ENCODE measurements at regions of chr6 and their contacts with region 1.

Region 1: GRCh38 chr6:167119670-167120381 is 3.1 kb upstream of the CCR6 start:
- DNase-seq: no peak

Region 2: DNA sequence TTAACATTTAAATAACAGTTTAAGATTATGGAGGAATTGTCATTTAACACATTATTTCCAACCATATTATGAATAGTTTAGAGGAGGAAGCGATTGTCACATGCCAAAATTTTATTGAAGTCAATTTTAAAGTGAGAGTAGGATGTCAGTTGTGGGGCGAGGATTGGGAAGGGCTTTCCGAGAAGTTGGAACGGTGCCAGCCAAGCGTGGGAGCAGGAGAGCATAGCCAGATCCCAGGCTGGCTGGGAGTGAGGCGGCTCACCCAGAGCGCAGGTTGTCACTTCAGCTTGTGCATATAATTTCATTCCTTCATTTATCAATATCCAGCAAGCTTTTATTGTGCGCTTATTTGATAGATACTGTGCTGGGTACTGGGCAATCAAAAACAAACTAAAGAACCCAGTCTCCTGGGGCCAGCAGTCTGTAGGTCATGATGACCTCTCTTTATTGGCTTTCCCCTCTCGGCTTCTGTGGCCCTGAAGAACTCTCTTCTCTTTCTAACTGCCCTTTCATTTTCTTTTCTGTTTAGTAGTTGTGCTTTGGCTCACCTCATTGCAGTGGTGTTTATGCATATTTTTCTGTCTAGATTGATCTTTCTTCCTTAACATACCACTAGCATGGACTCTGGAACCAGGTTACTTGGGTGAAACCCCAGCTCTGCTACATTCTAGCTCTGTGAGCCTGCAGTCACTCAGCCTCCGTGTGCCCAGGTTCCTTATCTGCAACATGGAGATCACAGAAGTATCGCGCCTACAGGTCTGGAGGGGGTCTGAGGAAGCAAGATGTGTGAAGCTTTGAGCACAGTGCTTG is 114.3 kb before region 1 on chr6:
- intact Hi-C with region 1: loop called in 1 of 2 experiments (anchors 10 kb)
- DNase-seq: no peak

Region 3: DNA sequence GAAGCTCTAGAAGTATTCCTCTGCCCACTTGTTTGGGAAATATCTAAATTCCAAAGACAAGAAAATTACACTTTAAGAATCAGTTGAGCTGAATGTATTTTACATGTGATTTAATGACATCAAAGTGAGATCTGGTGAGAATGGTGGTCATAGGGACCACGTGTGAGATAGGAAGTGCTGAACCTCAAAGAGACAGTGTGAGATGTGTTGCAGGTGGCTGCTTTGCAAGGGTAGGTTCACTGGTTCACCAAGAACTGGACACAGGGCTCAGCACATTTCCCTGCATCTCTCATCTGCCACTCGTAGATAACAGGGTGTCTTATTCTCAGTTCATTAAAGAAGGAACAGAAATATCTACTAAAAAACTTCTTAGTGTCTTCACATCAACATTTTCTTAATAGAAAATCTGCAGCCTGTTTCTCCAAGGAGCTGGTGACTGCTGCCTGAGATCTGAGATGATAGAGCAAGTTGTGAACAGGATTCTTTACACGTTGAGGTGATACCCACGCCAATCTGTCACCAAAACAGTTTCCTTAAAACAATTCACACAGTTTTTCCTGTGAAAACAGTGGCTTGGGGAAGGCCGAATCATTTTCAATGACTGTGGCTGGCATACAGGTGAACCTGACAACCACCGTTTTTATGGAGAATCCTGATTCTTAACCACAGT is 10.3 kb after region 1 on chr6:
- intact Hi-C with region 1: no loop called
- DNase-seq: no peak